IMR-90 (cell line): ENCODE measurements at regions of chrX and their contacts with region 1.

Region 1: GRCh38 chrX:119775517-119776238 is 15.8 kb downstream of the RPL39 start:
- DNase-seq: no peak
- ATAC-seq: no peak
- H3K4me3 ChIP-seq: no peak overlapping the region
- H3K27ac ChIP-seq: no peak overlapping the region
- H3K4me1 ChIP-seq: no peaks in the 10 kb centered on the region
- H3K27me3 ChIP-seq: no peaks in the 10 kb centered on the region
- CTCF ChIP-seq: no peak
- POLR2A ChIP-seq: no peak
- RAD21 ChIP-seq: no peak

Region 2: GRCh38 chrX:119606280-119607015 is 169.2 kb before region 1 on chrX and contains the start of gene NKRF:
- CTCF ChIA-PET with region 1: interaction called, 3 read pairs
- POLR2A ChIA-PET with region 1: no interaction called
- dilution Hi-C with region 1: no loop called
- in situ Hi-C with region 1: no loop called
- intact Hi-C with region 1: loop called (anchors 1 kb)
- DNase-seq: peak; percentile 90
- ATAC-seq: peak; percentile 81
- H3K4me3 ChIP-seq: peak within 1 kb of the TSS; percentile 97
- H3K27ac ChIP-seq: peak within 1 kb of the TSS; percentile 93
- H3K4me1 ChIP-seq: no peaks in the 10 kb centered on the region
- H3K27me3 ChIP-seq: no peaks in the 10 kb centered on the region
- CTCF ChIP-seq: no peak
- POLR2A ChIP-seq: peak; percentile 82
- RAD21 ChIP-seq: no peak
- total RNA-seq, gene NKRF: 2.2 and 3.6 TPM in 2 replicates

Region 3: GRCh38 chrX:119617517-119618164 is 158.0 kb before region 1 on chrX:
- CTCF ChIA-PET with region 1: no interaction called
- POLR2A ChIA-PET with region 1: no interaction called
- dilution Hi-C with region 1: no loop called
- in situ Hi-C with region 1: no loop called
- intact Hi-C with region 1: loop called (anchors 2 kb)
- DNase-seq: no peak
- ATAC-seq: no peak
- H3K4me3 ChIP-seq: no peak overlapping the region
- H3K27ac ChIP-seq: no peak overlapping the region
- H3K4me1 ChIP-seq: no peaks in the 10 kb centered on the region
- H3K27me3 ChIP-seq: no peaks in the 10 kb centered on the region
- CTCF ChIP-seq: no peak
- POLR2A ChIP-seq: no peak
- RAD21 ChIP-seq: no peak

Region 4: GRCh38 chrX:119698845-119699244 is 76.8 kb before region 1 on chrX:
- CTCF ChIA-PET with region 1: no interaction called
- POLR2A ChIA-PET with region 1: no interaction called
- dilution Hi-C with region 1: no loop called
- in situ Hi-C with region 1: no loop called
- intact Hi-C with region 1: loop called (anchors 5 kb)
- DNase-seq: peak; percentile 67
- ATAC-seq: peak; percentile 85
- H3K4me3 ChIP-seq: no peak overlapping the region
- H3K27ac ChIP-seq: no peak overlapping the region
- H3K4me1 ChIP-seq: no peaks in the 10 kb centered on the region
- H3K27me3 ChIP-seq: no peaks in the 10 kb centered on the region
- CTCF ChIP-seq: peak; percentile 60
- POLR2A ChIP-seq: no peak
- RAD21 ChIP-seq: peak; percentile 42

Region 5: DNA sequence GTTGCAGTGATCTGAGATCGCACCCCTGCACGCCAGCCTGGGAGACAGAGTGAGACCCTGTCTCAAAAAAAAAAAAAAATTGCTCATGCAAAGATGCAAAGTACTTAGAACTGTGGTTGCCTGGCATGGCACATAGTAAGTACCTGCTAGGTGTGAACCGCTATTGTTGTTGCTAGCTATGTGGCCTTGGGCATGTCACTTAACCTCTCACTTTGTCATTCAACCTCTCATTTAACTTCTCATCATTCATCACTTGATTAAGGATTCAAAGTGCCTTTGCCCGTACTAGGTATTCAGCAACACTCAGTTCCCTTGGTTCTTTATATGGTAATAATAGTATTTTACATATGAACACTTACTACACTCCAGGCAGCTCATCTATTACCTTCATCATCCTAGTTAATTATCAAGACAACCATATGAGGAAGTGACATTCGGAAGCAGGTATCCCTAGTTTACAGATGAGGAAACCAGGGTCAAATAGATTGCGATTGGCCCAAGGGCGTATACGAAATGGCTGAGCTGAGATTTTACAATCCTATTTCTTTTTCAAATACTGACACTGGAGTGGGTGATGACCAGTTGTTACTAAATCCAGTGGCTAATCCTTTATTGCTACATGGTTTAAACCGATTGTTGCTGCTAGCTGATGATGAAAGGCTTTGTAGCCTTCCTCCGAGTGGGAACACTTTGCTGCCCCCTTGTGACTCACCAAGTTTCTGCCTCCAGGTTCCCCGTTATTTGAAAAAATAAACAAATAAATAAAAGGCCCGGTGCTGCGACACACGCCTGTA is 46.1 kb before region 1 on chrX:
- CTCF ChIA-PET with region 1: interaction called, 3 read pairs
- POLR2A ChIA-PET with region 1: no interaction called
- dilution Hi-C with region 1: no loop called
- in situ Hi-C with region 1: no loop called
- intact Hi-C with region 1: loop called (anchors 2 kb)
- DNase-seq: peak; percentile 64
- ATAC-seq: peak; percentile 70
- H3K4me3 ChIP-seq: no peak overlapping the region
- H3K27ac ChIP-seq: no peak overlapping the region
- H3K4me1 ChIP-seq: no peaks in the 10 kb centered on the region; the same call in 1 of the 2 replicates
- H3K27me3 ChIP-seq: no peaks in the 10 kb centered on the region; the same call in 1 of the 2 replicates
- CTCF ChIP-seq: peak; percentile 65
- POLR2A ChIP-seq: no peak
- RAD21 ChIP-seq: peak; percentile 72